ENCODE measurements at regions of chr12 and their contacts with region 1.

Region 1: DNA sequence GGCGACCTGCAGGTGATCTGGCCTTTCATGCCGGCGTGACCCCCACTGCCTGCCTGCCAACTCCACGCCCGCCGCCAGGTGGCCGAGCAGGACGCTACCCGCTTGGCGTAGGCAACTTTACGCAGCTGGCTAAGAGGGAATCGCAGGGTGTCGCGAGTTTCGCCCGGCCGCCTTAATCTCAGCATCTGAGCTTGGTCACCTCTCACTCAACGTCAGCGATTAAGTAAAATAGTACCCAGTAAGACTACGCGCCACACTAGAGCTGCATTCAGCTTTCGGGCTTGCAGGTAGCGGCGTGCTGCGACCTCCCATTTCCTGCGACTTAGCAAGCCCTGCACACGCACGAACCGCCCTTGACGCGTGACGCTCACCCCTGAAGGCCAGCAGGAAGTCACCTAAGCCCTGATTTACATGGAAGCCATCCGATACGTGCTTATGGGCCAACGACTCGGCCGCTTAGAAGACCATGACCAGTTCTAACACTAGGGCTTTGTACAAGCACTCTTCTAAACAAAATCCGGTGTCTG is 33.2 kb downstream of the WBP11 start:
- DNase-seq: peak; percentile 50 to 80
- ATAC-seq: peak; percentile 53 to 59
- H3K4me3 ChIP-seq: peak overlapping the region; percentile 72 to 80 (median 78)
- H3K27ac ChIP-seq: peak overlapping the region; percentile 89 to 98 (median 92)
- H3K4me1 ChIP-seq: peaks cover 10 to 20% of the 10 kb centered on the region in 2 donors
- H3K27me3 ChIP-seq: no peaks in the 10 kb centered on the region
- CTCF ChIP-seq: peak; percentile 80 to 93 (median 86)
- POLR2A ChIP-seq: peak in 1 of 2 donors; percentile 34

Region 2: DNA sequence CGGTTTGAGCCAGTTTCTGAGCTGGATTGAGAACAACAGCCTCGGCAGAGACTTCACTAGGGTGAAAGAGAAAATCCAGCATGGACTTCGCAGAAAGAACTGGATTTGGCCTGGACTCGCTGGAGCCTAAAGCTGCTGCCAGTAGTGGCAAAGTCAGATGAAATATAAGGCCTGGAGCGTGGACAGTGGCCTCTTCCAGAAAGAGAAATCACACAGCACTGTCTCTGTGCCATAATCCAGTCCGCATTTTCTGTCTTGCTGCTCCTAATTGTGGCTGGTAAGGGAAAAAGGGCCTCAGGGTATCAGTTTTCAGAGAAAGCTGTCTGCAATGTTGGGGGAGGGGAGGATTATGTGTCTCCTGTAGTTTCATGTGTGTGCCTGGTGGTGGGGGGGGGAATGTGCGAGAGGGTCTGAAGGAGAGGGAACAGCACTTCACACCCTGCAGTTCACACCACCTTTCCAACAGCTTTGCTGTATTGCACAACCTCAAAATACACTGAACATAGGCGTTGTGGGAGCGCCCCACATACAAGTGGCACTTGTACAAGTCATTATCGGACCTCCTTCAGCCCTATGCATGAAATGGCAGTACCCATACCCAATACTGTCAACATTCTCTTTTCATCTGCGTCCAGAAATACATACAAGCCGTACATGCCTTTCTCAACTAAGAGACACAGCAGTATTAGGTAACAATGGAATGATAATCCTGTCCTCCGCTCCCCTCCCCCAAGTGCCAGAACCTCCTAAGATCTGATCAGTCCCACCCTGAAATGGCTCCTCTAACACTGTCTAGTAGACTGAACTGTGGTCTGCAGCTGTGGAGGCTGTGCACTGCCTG is 512.1 kb before region 1 on chr12:
- in situ Hi-C with region 1: no loop called
- intact Hi-C with region 1: loop called (anchors 5 kb)
- DNase-seq: peak; percentile 84 to 95
- ATAC-seq: peak; percentile 82 to 88
- H3K4me3 ChIP-seq: peak overlapping the region; percentile 37 to 43 (median 42)
- H3K27ac ChIP-seq: peak overlapping the region; percentile 85 to 87 (median 85)
- H3K4me1 ChIP-seq: peaks cover 37 to 38% of the 10 kb centered on the region in 2 donors
- H3K27me3 ChIP-seq: no peaks in the 10 kb centered on the region
- CTCF ChIP-seq: peak in 1 of 5 experiments; percentile 32
- POLR2A ChIP-seq: peak in 1 of 2 donors; percentile 11

Region 3: GRCh38 chr12:14365294-14366208 is 404.5 kb before region 1 on chr12 and contains the start of gene ATF7IP:
- in situ Hi-C with region 1: no loop called
- intact Hi-C with region 1: loop called (anchors 5 kb)
- DNase-seq: peak; percentile 90 to 96
- ATAC-seq: peak; percentile 95 to 96
- H3K4me3 ChIP-seq: peak within 1 kb of the TSS; percentile 71 to 89 (median 86)
- H3K27ac ChIP-seq: peak within 1 kb of the TSS; percentile 94 to 96 (median 95)
- H3K4me1 ChIP-seq: peaks cover 0 to 12% of the 10 kb centered on the region in 2 donors
- H3K27me3 ChIP-seq: no peaks in the 10 kb centered on the region
- CTCF ChIP-seq: peak in 2 of 5 experiments; percentile 30 to 40
- POLR2A ChIP-seq: peak; percentile 66 to 86
- total RNA-seq, gene ATF7IP: 15.9 to 42.2 (median 30.7) TPM

Region 4: DNA sequence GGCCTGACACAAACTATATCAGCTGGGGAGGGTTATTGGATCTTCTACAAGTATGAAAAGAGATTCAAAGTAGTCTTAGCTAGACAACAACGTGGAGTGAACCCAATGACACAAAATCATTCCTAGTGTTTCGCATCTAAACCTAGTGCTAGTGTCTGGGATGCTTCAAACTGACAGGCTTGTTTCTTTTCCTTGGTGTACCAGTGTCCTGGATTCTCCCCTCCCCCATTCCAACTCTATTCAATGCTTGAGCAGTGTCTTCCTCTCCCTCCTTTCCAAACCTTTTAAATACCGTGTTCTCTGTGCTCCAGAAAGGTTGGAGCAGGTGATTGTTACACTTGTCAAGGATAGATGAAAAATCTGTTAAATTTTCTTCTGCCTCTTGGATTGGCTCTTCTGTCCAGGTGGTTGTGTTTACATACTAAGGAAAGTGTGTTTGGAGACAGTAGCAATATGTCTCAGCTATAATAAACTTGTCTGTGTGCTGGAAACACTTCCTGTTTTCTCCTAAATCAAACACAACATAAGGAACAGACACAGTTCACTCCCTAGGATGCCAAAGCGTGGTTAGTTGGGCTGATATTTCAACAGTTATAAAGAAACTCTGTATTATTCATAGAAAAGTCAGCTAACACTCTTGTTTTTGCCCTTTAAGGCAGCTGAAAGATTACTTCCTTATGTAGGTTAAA is 59.3 kb before region 1 on chr12:
- in situ Hi-C with region 1: no loop called
- intact Hi-C with region 1: no loop called
- DNase-seq: no peak
- ATAC-seq: no peak
- H3K4me3 ChIP-seq: no peak overlapping the region
- H3K27ac ChIP-seq: no peak overlapping the region
- H3K4me1 ChIP-seq: no peaks in the 10 kb centered on the region
- H3K27me3 ChIP-seq: no peaks in the 10 kb centered on the region
- CTCF ChIP-seq: no peak
- POLR2A ChIP-seq: no peak

Region 5: DNA sequence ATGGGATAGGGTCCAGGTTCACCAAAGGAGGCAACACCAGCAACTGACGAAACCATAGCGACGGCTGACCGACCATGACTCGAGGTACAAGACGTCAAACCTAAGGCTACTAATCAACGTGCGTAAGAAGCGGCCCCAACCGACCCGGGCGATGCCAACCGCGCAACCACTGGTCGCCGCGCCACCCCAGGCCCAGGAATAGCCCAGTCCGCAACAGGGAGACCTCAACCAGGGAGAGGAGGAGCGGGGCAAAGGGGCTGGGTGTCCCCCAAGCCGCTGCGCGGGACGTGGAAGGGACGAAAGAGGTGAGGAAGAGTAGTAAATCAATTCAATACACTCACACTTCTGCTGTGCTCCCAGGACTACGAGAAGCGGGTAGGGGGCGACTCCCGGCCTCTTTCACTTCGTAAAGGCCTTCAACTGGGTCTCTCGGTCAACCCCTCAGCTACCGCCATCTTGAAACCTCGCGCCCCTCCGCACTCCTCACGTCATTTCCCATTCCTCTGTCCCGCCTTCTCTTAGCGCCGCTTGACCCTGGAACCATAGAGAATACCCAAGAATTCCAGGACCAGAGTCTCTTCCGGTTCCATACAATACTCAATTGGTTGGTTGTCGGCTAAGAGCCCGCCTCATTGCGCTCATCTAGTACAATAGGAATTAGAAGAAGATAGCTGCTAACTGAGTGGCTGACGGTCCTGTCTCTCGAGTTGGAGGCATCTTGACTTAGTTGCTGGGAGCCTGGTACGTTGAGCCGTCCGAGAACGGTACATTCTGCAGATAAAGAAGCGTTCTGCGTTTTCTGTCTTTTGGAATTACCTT is 33.2 kb after region 1 on chr12 and contains the starts of genes C12orf60 and WBP11:
- in situ Hi-C with region 1: no loop called
- intact Hi-C with region 1: loop called (anchors 1 kb)
- DNase-seq: peak; percentile 97 to 98
- ATAC-seq: peak; percentile 100
- H3K4me3 ChIP-seq: peak within 1 kb of the TSS; percentile 75 to 100 (median 83)
- H3K27ac ChIP-seq: peak within 1 kb of the TSS; percentile 86 to 98 (median 92)
- H3K4me1 ChIP-seq: peaks cover 15 to 22% of the 10 kb centered on the region in 2 donors
- H3K27me3 ChIP-seq: no peaks in the 10 kb centered on the region
- CTCF ChIP-seq: no peak
- POLR2A ChIP-seq: peak; percentile 59 to 71
- total RNA-seq, gene C12orf60: 0.33 to 3.8 TPM in 2 of 4 donors, not detected in the others
- total RNA-seq, gene WBP11: 20.2 to 39.5 (median 28.4) TPM

Region 6: GRCh38 chr12:14892726-14893505 is 122.9 kb after region 1 on chr12:
- in situ Hi-C with region 1: no loop called
- intact Hi-C with region 1: loop called (anchors 5 kb)
- DNase-seq: peak; percentile 35 to 65
- ATAC-seq: peak; percentile 82 to 83
- H3K4me3 ChIP-seq: no peak overlapping the region
- H3K27ac ChIP-seq: peak overlapping the region; percentile 65 to 71 (median 67)
- H3K4me1 ChIP-seq: peaks cover 3 to 17% of the 10 kb centered on the region in 2 donors
- H3K27me3 ChIP-seq: no peaks in the 10 kb centered on the region
- CTCF ChIP-seq: no peak
- POLR2A ChIP-seq: peak in 1 of 2 donors; percentile 32

Region 7: GRCh38 chr12:14995583-14996425 is 225.8 kb after region 1 on chr12:
- in situ Hi-C with region 1: no loop called
- intact Hi-C with region 1: loop called (anchors 2 kb)
- DNase-seq: no peak
- ATAC-seq: no peak
- H3K4me3 ChIP-seq: no peak overlapping the region
- H3K27ac ChIP-seq: no peak overlapping the region
- H3K4me1 ChIP-seq: peaks cover 3 to 8% of the 10 kb centered on the region in 2 donors
- H3K27me3 ChIP-seq: no peaks in the 10 kb centered on the region
- CTCF ChIP-seq: peak; percentile 32 to 73 (median 57)
- POLR2A ChIP-seq: no peak

Region 8: GRCh38 chr12:15423629-15424028 is 653.6 kb after region 1 on chr12:
- in situ Hi-C with region 1: no loop called
- intact Hi-C with region 1: no loop called
- DNase-seq: no peak
- ATAC-seq: no peak
- H3K4me3 ChIP-seq: no peak overlapping the region
- H3K27ac ChIP-seq: no peak overlapping the region
- H3K4me1 ChIP-seq: no peaks in the 10 kb centered on the region
- H3K27me3 ChIP-seq: no peaks in the 10 kb centered on the region
- CTCF ChIP-seq: no peak
- POLR2A ChIP-seq: no peak

Region 9: DNA sequence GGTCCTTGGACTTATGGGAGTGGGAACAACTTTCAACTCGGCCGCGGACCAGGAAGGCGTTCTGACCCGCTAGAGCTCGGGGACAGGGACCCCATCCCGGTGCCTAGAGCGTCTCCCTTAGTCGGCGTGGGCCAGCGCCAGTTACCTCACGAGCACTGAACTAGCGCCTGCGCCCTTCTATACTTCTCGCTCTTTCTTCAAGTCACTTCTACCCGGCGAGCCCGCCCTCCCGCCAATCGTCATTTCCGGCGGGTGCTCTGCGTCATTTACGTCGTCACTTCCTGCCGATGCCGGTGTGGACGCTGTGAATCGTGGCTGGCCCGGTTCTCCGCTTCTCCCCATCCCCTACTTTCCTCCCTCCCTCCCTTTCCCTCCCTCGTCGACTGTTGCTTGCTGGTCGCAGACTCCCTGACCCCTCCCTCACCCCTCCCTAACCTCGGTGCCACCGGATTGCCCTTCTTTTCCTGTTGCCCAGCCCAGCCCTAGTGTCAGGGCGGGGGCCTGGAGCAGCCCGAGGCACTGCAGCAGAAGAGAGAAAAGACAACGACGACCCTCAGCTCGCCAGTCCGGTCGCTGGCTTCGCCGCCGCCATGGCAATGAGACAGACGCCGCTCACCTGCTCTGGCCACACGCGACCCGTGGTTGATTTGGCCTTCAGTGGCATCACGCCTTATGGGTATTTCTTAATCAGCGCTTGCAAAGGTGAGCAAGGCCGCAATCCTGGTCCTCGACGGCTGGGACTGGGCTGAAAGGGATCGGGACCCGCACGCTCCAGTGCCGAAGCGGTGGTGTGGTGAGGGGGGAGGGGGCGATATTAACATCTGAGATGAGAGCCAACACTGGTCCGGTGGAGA is 1112.3 kb after region 1 on chr12 and contains the start of gene STRAP:
- in situ Hi-C with region 1: loop called in 1 of 4 experiments (anchors 25 kb)
- intact Hi-C with region 1: loop called (anchors 1 kb)
- DNase-seq: peak; percentile 93 to 97
- ATAC-seq: peak; percentile 95 to 96
- H3K4me3 ChIP-seq: peak within 1 kb of the TSS; percentile 92 to 99 (median 97)
- H3K27ac ChIP-seq: peak within 1 kb of the TSS; percentile 91 to 100 (median 99)
- H3K4me1 ChIP-seq: peaks cover 33 to 34% of the 10 kb centered on the region in 2 donors
- H3K27me3 ChIP-seq: no peaks in the 10 kb centered on the region
- CTCF ChIP-seq: peak in 1 of 5 experiments; percentile 18
- POLR2A ChIP-seq: peak; percentile 96 to 98
- total RNA-seq, gene STRAP: 77.7 to 106 (median 102) TPM

Measured in gastrocnemius medialis (tissue), 4 donors.